Sciatic nerve (tissue), 2 donors: ENCODE measurements at regions of chr12 and their contacts with region 1.

Region 1: GRCh38 chr12:128690641-128691040 is 133.1 kb downstream of the SLC15A4 start:
- DNase-seq: no peak
- ATAC-seq: no peak

Region 2: DNA sequence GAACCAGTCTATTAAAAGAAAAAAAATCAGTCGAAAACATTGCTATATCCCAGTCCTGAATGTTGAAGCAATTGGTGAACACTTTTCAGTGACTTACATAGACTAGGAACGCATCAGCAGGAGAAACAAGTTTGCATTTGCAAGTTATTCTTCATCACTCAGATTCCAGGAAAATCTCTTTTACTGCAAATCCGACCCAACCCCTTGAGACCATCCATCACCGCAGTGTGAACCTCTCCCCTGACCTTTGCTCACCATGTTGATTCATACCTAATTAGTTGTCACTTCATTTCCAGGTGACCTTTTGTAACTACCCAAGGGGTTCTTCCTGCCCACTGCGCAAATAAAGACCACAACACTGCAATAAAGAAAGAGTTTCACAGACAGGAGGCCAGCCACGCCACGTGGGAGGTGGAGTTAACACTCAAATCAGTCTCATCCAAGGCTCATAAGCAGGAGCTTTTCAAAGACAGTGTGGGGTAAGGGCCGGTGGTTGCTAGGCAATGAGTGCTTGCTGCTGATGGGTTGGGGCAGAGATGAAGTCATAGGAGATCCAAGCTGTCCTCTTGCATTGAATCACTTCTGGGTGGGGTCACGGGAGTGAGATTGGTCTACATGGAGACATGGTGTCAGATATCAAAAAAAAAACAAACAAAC is 664.9 kb before region 1 on chr12:
- intact Hi-C with region 1: loop called (anchors 10 kb)
- DNase-seq: no peak
- ATAC-seq: peak; percentile 85